H1 (cell line): ENCODE measurements at regions of chr20 and their contacts with region 1.

Region 1: GRCh38 chr20:5191829-5192569 is 65.2 kb downstream of the CDS2 start:
- DNase-seq: no peak
- H3K4me3 ChIP-seq: no peak overlapping the region
- H3K27ac ChIP-seq: peak overlapping the region; percentile 47; the same call in 1 of the 2 replicates
- H3K4me1 ChIP-seq: peaks cover 0 to 4% (median 0%) of the 10 kb centered on the region in 4 experiments; a peak in 3 of 7 replicates
- H3K27me3 ChIP-seq: no peaks in the 10 kb centered on the region
- CTCF ChIP-seq: peak in 2 of 3 experiments; percentile 63 to 73; a peak in 3 of 4 replicates
- EP300 ChIP-seq: no peak
- POLR2A ChIP-seq: no peak
- RAD21 ChIP-seq: peak; percentile 89 to 91

Region 2: GRCh38 chr20:5100684-5101347 is 91.2 kb before region 1 on chr20:
- CTCF ChIA-PET with region 1: interaction called, 12 read pairs
- POLR2A ChIA-PET with region 1: no interaction called
- DNase-seq: peak in 1 of 2 experiments; percentile 89
- H3K4me3 ChIP-seq: no peak overlapping the region
- H3K27ac ChIP-seq: no peak overlapping the region
- H3K4me1 ChIP-seq: no peaks in the 10 kb centered on the region
- H3K27me3 ChIP-seq: no peaks in the 10 kb centered on the region
- CTCF ChIP-seq: peak; percentile 73 to 77 (median 75)
- EP300 ChIP-seq: no peak
- POLR2A ChIP-seq: no peak
- RAD21 ChIP-seq: peak; percentile 78 to 80

Region 3: GRCh38 chr20:5119435-5120188 is 72.4 kb before region 1 on chr20 and contains the start of gene PCNA:
- CTCF ChIA-PET with region 1: interaction called, 122 read pairs
- POLR2A ChIA-PET with region 1: interaction called, 25 read pairs
- DNase-seq: peak; percentile 92 to 93
- H3K4me3 ChIP-seq: peak within 1 kb of the TSS; percentile 91 to 99 (median 96)
- H3K27ac ChIP-seq: peak within 1 kb of the TSS; percentile 99
- H3K4me1 ChIP-seq: peaks cover 0 to 1% (median 0%) of the 10 kb centered on the region in 4 experiments; a peak in 1 of 7 replicates
- H3K27me3 ChIP-seq: no peaks in the 10 kb centered on the region
- CTCF ChIP-seq: no peak
- EP300 ChIP-seq: no peak
- POLR2A ChIP-seq: peak; percentile 99 to 100
- RAD21 ChIP-seq: no peak
- total RNA-seq, gene PCNA: 286 and 290 TPM in 2 replicates

Region 4: DNA sequence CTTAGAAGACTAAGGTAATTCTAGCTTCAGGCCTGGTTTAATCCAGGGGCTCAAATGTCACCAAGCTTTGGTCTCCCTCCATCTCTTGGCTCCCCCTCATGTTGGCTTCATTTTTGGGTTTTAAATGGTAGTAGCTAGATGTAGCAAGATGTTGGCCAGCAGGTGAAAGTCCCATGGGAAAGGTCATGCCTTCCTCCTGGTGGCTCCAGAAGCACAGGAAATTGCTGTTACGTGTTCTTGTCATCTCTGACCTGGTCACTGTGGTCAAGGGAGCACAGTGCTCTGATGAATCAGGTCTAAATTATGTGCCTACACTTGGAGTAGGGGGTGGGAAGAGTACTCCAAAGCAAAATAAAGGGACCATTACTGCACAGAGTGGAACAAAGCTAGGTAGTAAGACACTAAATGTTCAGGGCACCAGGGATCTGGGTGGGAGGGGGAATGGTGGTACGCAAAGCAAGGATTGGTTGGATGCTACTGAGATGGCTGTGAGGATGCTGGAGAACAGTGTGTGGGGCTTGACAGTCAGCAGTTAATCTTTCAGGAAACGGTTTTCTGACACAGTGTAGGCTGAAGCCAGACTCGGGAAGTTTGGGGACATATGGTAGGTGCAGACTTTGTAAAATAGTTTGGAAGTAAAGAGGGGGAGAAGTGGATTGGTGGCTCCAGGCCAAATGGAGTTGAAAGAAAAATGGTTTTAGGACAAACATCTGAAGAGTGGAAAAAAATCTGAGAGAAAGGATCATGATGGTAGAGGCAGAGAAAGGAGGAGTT is 35.1 kb before region 1 on chr20:
- CTCF ChIA-PET with region 1: interaction called, 12 read pairs
- POLR2A ChIA-PET with region 1: no interaction called
- DNase-seq: no peak
- H3K4me3 ChIP-seq: no peak overlapping the region
- H3K27ac ChIP-seq: no peak overlapping the region
- H3K4me1 ChIP-seq: no peaks in the 10 kb centered on the region
- H3K27me3 ChIP-seq: no peaks in the 10 kb centered on the region
- CTCF ChIP-seq: no peak
- EP300 ChIP-seq: no peak
- POLR2A ChIP-seq: no peak
- RAD21 ChIP-seq: no peak

Region 5: GRCh38 chr20:5180933-5181332 is 11.1 kb before region 1 on chr20:
- CTCF ChIA-PET with region 1: interaction called, 20 read pairs
- POLR2A ChIA-PET with region 1: interaction called, 3 read pairs
- DNase-seq: no peak
- H3K4me3 ChIP-seq: no peak overlapping the region
- H3K27ac ChIP-seq: no peak overlapping the region
- H3K4me1 ChIP-seq: peaks cover 4 to 16% (median 10%) of the 10 kb centered on the region in 4 experiments; a peak in 5 of 7 replicates
- H3K27me3 ChIP-seq: no peaks in the 10 kb centered on the region
- CTCF ChIP-seq: no peak
- EP300 ChIP-seq: no peak
- POLR2A ChIP-seq: no peak
- RAD21 ChIP-seq: no peak

Region 6: GRCh38 chr20:5222919-5223634 is 31.1 kb after region 1 on chr20:
- CTCF ChIA-PET with region 1: interaction called, 15 read pairs
- POLR2A ChIA-PET with region 1: no interaction called
- DNase-seq: peak; percentile 13 to 68
- H3K4me3 ChIP-seq: no peak overlapping the region
- H3K27ac ChIP-seq: no peak overlapping the region
- H3K4me1 ChIP-seq: no peaks in the 10 kb centered on the region
- H3K27me3 ChIP-seq: no peaks in the 10 kb centered on the region
- CTCF ChIP-seq: peak; percentile 75 to 91 (median 78)
- EP300 ChIP-seq: no peak
- POLR2A ChIP-seq: no peak
- RAD21 ChIP-seq: peak; percentile 81 to 87

Region 7: DNA sequence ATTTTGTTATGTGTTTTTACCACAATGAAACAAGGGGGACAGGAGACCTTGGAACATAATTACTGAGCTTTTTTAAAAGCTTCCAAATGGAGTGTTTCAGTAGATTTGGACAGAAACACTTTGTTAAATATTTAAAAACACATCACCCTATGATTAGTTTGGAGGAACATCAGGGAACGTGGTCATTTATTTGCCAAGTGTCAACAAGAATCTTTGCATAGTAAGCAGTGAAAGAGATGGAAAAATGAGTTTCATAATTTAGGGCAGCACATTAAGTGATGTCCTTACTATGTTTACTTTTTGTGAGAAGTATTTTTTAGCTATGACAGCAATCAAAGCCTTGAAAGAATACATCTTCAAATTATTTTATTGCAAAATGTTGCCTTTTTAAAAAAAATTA is 42.2 kb after region 1 on chr20:
- CTCF ChIA-PET with region 1: no interaction called
- POLR2A ChIA-PET with region 1: no interaction called
- DNase-seq: no peak
- H3K4me3 ChIP-seq: no peak overlapping the region
- H3K27ac ChIP-seq: no peak overlapping the region
- H3K4me1 ChIP-seq: no peaks in the 10 kb centered on the region
- H3K27me3 ChIP-seq: no peaks in the 10 kb centered on the region
- CTCF ChIP-seq: no peak
- EP300 ChIP-seq: no peak
- POLR2A ChIP-seq: no peak
- RAD21 ChIP-seq: no peak

Region 8: DNA sequence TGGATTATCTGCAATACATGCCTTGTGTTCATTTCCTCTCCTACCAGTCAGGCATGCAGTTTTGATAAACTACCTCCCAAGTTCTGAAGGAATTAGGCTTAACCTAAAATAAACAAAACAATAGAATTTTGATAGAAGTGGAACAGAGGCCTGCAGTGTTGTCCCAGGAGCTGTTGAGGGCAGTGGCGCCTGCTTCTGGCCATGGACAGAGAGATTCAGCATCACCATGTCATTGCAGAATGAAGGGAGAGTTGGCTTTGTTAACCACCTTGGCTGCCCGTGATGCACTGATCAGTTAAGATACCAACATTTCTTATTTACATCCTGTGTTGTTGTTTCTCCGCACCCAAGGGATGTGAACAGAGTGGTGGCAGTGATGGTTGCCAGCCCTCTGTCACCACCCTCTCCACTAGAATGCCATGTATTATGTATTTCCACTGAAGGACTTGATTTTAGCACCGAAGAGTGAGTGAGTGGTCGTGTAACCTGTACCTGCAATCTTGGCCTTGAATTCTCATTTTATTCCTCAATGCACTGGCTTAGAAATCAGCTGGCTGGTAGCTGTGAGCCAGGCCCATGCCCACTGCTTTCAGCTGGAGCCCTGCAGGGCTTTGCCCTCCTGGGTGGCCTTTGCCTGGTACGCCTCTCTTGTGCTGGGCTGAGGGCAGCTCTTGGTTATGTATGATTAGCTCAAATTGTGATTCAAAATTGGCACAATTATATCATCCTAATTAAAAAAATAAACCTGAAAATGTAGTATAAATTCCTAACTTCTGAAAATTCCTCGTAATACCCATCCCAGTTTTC is 614.7 kb after region 1 on chr20:
- CTCF ChIA-PET with region 1: no interaction called
- POLR2A ChIA-PET with region 1: no interaction called
- DNase-seq: peak in 1 of 2 experiments; percentile 41
- H3K4me3 ChIP-seq: no peak overlapping the region
- H3K27ac ChIP-seq: no peak overlapping the region
- H3K4me1 ChIP-seq: peaks cover 0 to 10% (median 2%) of the 10 kb centered on the region in 4 experiments; a peak in 4 of 7 replicates
- H3K27me3 ChIP-seq: no peaks in the 10 kb centered on the region
- CTCF ChIP-seq: peak; percentile 44 to 63 (median 49)
- EP300 ChIP-seq: no peak
- POLR2A ChIP-seq: no peak
- RAD21 ChIP-seq: peak; percentile 70 to 72